GM13977 (cell line): ENCODE measurements at regions of chr12 and their contacts with region 1.

Region 1: GRCh38 chr12:128259556-128260070 is 7.4 kb upstream of the TMEM132C start:
- DNase-seq: no peak
- CTCF ChIP-seq: peak; percentile 67

Region 2: DNA sequence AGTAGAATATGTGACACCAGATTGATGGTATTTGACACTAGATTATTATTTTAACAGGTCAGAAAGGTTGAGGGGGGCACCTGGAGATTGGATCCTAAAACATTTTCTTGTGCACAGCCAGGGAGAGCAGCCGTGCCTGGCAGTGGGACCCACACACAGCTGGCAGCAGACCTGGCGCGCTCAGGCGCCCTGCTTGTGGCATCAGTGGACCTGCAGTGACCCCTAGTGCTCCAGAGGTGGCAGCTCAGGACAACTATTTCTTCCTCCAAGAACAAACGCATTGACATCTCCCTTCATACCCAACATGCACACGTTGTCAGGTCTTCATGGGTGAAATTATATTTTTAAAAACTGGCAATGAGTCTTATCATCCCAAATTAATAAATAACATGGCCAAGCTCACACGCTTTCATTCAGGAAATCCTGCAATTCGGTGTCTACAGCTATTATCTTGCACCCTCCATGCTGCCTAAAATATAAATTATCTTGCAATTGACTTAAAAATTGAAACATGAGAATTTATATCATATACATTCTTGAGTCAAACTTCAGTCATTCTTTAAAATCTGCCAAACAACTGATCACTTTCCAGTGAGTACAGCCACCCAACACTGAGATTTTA is 1651.9 kb after region 1 on chr12:
- in situ Hi-C with region 1: loop called (anchors 25 kb)
- DNase-seq: peak; percentile 76
- CTCF ChIP-seq: peak; percentile 89